GM12878 (cell line): ENCODE measurements at regions of chr11 and their contacts with region 1.

Region 1: GRCh38 chr11:35721651-35722282 is 59.2 kb downstream of the TRIM44 start:
- DNase-seq: no peak
- ATAC-seq: peak; percentile 81
- H3K4me3 ChIP-seq: peak overlapping the region; percentile 24
- H3K27ac ChIP-seq: peak overlapping the region; percentile 65
- H3K4me1 ChIP-seq: peaks cover 33% of the 10 kb centered on the region
- H3K27me3 ChIP-seq: no peaks in the 10 kb centered on the region
- CTCF ChIP-seq: no peak
- EP300 ChIP-seq: peak; percentile 8 to 40; a peak in 1 of 4 replicates
- POLR2A ChIP-seq: no peak
- RAD21 ChIP-seq: no peak

Region 2: DNA sequence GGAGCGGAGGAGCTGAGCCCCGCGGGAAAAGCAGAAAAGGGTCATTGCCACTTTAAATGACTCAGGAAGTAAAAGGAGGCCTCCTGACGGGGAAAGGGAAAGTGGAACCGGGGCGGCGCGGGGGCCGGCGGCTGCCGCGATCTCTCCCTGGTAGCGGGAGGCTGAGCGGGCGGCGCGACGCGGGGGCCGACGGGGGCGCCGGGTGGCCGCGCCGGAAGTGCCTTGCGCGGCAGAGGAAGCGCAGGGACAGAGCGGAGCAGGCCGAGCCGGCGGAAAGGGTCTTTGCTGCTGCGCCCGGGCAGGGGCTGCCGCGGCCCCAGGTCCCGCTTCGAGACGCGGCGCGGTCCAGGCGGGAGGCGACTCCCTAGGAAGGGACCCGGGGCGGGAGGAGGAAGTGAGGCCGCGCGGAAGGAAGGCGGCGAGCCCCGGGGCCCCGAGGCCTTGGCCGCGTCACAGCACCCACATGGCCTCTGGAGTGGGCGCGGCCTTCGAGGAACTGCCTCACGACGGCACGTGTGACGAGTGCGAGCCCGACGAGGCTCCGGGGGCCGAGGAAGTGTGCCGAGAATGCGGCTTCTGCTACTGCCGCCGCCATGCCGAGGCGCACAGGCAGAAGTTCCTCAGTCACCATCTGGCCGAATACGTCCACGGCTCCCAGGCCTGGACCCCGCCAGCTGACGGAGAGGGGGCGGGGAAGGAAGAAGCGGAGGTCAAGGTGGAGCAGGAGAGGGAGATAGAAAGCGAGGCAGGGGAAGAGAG is 58.9 kb before region 1 on chr11 and contains the start of gene TRIM44:
- CTCF ChIA-PET with region 1: no interaction called
- POLR2A ChIA-PET with region 1: no interaction called
- RAD21 ChIA-PET with region 1: no interaction called
- SMC1A ChIA-PET with region 1: no interaction called
- in situ Hi-C with region 1: no loop called
- intact Hi-C with region 1: loop called (anchors 2 kb)
- DNase-seq: peak; percentile 37
- ATAC-seq: peak; percentile 93
- H3K4me3 ChIP-seq: peak within 1 kb of the TSS; percentile 73
- H3K27ac ChIP-seq: peak within 1 kb of the TSS; percentile 70
- H3K4me1 ChIP-seq: peaks cover 7% of the 10 kb centered on the region
- H3K27me3 ChIP-seq: no peaks in the 10 kb centered on the region
- CTCF ChIP-seq: no peak
- EP300 ChIP-seq: 0 out of 4 replicates have a peak, but pooled peaks of 1 of the 2 experiments have one; percentile 19
- POLR2A ChIP-seq: peak; percentile 89
- RAD21 ChIP-seq: no peak
- polyA plus RNA-seq, gene TRIM44: 6.7 to 8.9 TPM

Region 3: GRCh38 chr11:35702126-35702525 is 19.6 kb before region 1 on chr11:
- CTCF ChIA-PET with region 1: no interaction called
- POLR2A ChIA-PET with region 1: no interaction called
- RAD21 ChIA-PET with region 1: no interaction called
- SMC1A ChIA-PET with region 1: no interaction called
- in situ Hi-C with region 1: no loop called
- intact Hi-C with region 1: no loop called
- DNase-seq: no peak
- ATAC-seq: no peak
- H3K4me3 ChIP-seq: no peak overlapping the region
- H3K27ac ChIP-seq: no peak overlapping the region
- H3K4me1 ChIP-seq: no peaks in the 10 kb centered on the region
- H3K27me3 ChIP-seq: no peaks in the 10 kb centered on the region
- CTCF ChIP-seq: no peak
- EP300 ChIP-seq: no peak
- POLR2A ChIP-seq: no peak
- RAD21 ChIP-seq: no peak

Region 4: DNA sequence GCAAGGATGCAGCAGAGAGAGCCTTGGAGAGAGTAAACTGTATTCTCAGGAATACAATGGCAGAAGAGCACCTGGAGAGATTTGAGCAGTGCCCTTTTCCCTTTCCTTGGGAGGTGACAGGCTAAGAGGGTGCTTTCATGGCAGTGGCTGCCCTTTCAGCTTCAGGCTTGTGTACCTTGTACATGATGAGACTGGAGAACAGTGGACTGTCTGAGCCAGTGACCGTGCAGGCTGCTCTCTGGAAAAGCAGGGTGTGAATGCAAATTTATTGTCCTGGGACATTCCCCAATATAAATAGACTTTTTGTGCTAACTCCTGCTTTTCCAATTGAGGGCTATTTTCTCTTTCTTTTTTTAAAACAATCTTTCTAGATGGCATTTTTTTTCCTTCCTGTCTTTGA is 40.1 kb after region 1 on chr11:
- CTCF ChIA-PET with region 1: no interaction called
- POLR2A ChIA-PET with region 1: no interaction called
- RAD21 ChIA-PET with region 1: no interaction called
- SMC1A ChIA-PET with region 1: no interaction called
- in situ Hi-C with region 1: no loop called
- intact Hi-C with region 1: loop called (anchors 1 kb)
- DNase-seq: no peak
- ATAC-seq: no peak
- H3K4me3 ChIP-seq: no peak overlapping the region
- H3K27ac ChIP-seq: no peak overlapping the region
- H3K4me1 ChIP-seq: no peaks in the 10 kb centered on the region
- H3K27me3 ChIP-seq: no peaks in the 10 kb centered on the region
- CTCF ChIP-seq: no peak
- EP300 ChIP-seq: no peak
- POLR2A ChIP-seq: no peak
- RAD21 ChIP-seq: no peak

Region 5: GRCh38 chr11:35785287-35786167 is 63.8 kb after region 1 on chr11:
- CTCF ChIA-PET with region 1: no interaction called
- POLR2A ChIA-PET with region 1: no interaction called
- RAD21 ChIA-PET with region 1: interaction called, 3 read pairs
- SMC1A ChIA-PET with region 1: interaction called, 20 read pairs
- in situ Hi-C with region 1: no loop called
- intact Hi-C with region 1: no loop called
- DNase-seq: peak; percentile 43
- ATAC-seq: peak; percentile 86
- H3K4me3 ChIP-seq: no peak overlapping the region
- H3K27ac ChIP-seq: peak overlapping the region; percentile 66
- H3K4me1 ChIP-seq: peaks cover 17% of the 10 kb centered on the region
- H3K27me3 ChIP-seq: no peaks in the 10 kb centered on the region
- CTCF ChIP-seq: no peak
- EP300 ChIP-seq: no peak
- POLR2A ChIP-seq: no peak
- RAD21 ChIP-seq: no peak